BJ (cell line): ENCODE measurements at regions of chr18 and their contacts with region 1.

Region 1: GRCh38 chr18:8982416-8983184 is 119.9 kb upstream of the NDUFV2 start:
- DNase-seq: peak; percentile 93
- H3K4me3 ChIP-seq: no peak overlapping the region
- H3K27me3 ChIP-seq: no peaks in the 10 kb centered on the region
- CTCF ChIP-seq: peak; percentile 55

Region 2: GRCh38 chr18:8654503-8655451 is 327.8 kb before region 1 on chr18:
- CTCF ChIA-PET with region 1: interaction called, 75 read pairs
- POLR2A ChIA-PET with region 1: interaction called, 3 read pairs
- DNase-seq: no peak
- H3K4me3 ChIP-seq: no peak overlapping the region
- H3K27me3 ChIP-seq: 0 out of 2 replicates have a peak, but pooled peaks cover 1% of the 10 kb centered on the region
- CTCF ChIP-seq: peak; percentile 62

Region 3: GRCh38 chr18:8696749-8697211 is 285.8 kb before region 1 on chr18:
- CTCF ChIA-PET with region 1: interaction called, 32 read pairs
- POLR2A ChIA-PET with region 1: no interaction called
- DNase-seq: no peak
- H3K4me3 ChIP-seq: no peak overlapping the region
- H3K27me3 ChIP-seq: no peaks in the 10 kb centered on the region
- CTCF ChIP-seq: peak; percentile 92

Region 4: DNA sequence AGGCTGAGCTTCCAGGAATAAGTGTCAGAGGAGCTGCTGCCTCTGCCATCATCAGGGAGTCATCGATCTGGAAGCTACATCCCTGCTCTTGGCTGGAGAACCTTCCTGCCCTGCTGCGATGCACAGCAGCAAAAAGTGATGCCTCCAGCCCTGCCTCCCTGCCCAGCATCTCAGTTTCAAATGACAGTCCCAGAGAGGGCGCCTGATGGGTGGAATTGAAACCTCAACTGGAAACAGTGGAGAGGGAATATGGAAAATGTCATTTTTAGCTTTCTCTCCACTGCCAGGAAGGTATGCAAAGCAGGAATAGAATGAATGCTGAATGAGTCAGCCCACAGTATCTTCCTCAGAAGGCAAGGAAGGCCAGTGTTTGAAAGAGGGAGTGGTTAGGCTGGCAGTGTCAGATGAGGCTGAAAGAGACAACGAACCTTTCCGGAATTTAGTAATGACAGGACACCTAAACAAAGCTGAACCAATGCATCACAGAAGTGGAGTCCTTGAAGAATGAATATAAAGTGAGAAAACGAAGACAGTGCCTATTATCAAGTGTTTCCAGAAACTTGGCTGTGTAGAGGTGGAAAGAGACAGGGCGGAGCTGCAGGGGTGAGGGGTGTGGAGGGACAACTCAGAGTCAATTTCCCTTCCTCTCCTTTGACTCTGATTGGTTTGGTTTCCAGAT is 34.0 kb before region 1 on chr18:
- CTCF ChIA-PET with region 1: interaction called, 42 read pairs
- POLR2A ChIA-PET with region 1: interaction called, 5 read pairs
- DNase-seq: peak; percentile 81
- H3K4me3 ChIP-seq: peak overlapping the region; percentile 20
- H3K27me3 ChIP-seq: no peaks in the 10 kb centered on the region
- CTCF ChIP-seq: 0 out of 2 replicates have a peak, but pooled peaks have one; percentile 5

Region 5: DNA sequence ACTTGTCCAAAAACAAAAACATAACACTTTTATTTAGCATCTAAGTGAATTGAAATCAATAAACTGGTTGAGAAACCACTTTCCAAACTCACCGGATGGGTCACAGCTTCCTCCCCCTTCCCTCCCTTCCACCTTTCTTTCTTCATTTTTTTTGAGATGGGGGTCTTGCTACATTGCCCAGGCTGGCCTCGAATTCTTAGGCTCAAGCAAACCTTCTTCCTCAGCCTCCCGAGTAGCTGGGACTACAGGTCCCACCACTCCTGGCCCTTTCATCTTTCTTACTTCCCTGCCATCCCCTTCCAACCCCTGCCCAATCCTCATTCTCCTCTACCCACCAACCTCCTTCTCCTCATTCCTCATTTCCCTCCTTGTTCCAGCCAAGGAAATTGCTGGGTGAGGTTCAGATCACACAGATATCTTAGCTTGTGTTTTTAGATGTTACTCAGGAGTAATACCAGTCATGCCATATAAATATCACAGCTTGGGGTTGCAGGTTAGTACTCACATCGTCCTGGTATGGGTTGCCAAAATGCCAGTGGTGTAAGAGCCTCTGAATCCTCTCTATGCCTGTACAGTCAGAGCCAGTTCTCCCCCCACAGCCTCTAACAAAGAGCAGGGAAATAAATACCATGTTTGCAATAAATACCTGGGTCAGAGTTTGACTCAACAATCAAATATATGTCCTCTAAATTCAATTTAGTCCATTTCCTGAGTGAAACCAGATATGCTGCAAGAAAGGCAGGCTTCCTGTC is 12.8 kb before region 1 on chr18:
- CTCF ChIA-PET with region 1: interaction called, 15 read pairs
- POLR2A ChIA-PET with region 1: interaction called, 5 read pairs
- DNase-seq: peak; percentile 60
- H3K4me3 ChIP-seq: no peak overlapping the region
- H3K27me3 ChIP-seq: no peaks in the 10 kb centered on the region
- CTCF ChIP-seq: no peak